ENCODE measurements at regions of chr17 and their contacts with region 1.

Region 1: GRCh38 chr17:37650419-37651003 is 7.3 kb upstream of the DDX52 start:
- DNase-seq: peak; percentile 62
- H3K4me3 Mint-ChIP-seq: no peak overlapping the region
- H3K27ac Mint-ChIP-seq: no peak overlapping the region
- H3K4me1 Mint-ChIP-seq: peaks cover 5% of the 10 kb centered on the region
- H3K27me3 Mint-ChIP-seq: peaks cover 12% of the 10 kb centered on the region
- CTCF ChIP-seq: peak; percentile 58

Region 2: GRCh38 chr17:37691807-37692400 is 41.4 kb after region 1 on chr17:
- CTCF ChIA-PET with region 1: interaction called, 16 read pairs
- POLR2A ChIA-PET with region 1: no interaction called
- intact Hi-C with region 1: no loop called
- DNase-seq: no peak
- H3K4me3 Mint-ChIP-seq: no peak overlapping the region
- H3K27ac Mint-ChIP-seq: no peak overlapping the region
- H3K4me1 Mint-ChIP-seq: peaks cover 7% of the 10 kb centered on the region
- H3K27me3 Mint-ChIP-seq: no peaks in the 10 kb centered on the region
- CTCF ChIP-seq: no peak

Region 3: DNA sequence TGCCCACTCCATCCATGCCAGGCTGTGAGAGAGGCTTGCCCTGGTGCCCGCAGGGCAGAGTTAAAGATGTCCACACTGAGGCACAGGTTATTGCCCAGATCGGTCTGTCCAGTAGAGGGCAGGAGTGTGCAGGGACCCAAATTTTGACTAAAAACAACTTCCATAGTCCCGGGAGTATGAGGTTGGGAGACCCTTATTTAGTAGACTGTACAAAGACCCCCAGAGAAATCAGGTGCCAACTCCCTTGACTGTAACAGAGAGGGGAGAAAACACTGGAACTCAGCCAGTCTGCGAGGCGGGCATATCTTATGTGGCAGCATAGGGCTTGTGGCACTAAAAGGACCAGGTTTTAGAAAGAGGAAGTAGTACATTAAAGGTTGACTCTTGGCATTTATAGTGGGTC is 51.0 kb after region 1 on chr17:
- CTCF ChIA-PET with region 1: interaction called, 5 read pairs
- POLR2A ChIA-PET with region 1: no interaction called
- intact Hi-C with region 1: loop called (anchors 1 kb)
- DNase-seq: peak; percentile 60
- H3K4me3 Mint-ChIP-seq: no peak overlapping the region
- H3K27ac Mint-ChIP-seq: no peak overlapping the region
- H3K4me1 Mint-ChIP-seq: peaks cover 20% of the 10 kb centered on the region
- H3K27me3 Mint-ChIP-seq: no peaks in the 10 kb centered on the region
- CTCF ChIP-seq: peak; percentile 52

Region 4: DNA sequence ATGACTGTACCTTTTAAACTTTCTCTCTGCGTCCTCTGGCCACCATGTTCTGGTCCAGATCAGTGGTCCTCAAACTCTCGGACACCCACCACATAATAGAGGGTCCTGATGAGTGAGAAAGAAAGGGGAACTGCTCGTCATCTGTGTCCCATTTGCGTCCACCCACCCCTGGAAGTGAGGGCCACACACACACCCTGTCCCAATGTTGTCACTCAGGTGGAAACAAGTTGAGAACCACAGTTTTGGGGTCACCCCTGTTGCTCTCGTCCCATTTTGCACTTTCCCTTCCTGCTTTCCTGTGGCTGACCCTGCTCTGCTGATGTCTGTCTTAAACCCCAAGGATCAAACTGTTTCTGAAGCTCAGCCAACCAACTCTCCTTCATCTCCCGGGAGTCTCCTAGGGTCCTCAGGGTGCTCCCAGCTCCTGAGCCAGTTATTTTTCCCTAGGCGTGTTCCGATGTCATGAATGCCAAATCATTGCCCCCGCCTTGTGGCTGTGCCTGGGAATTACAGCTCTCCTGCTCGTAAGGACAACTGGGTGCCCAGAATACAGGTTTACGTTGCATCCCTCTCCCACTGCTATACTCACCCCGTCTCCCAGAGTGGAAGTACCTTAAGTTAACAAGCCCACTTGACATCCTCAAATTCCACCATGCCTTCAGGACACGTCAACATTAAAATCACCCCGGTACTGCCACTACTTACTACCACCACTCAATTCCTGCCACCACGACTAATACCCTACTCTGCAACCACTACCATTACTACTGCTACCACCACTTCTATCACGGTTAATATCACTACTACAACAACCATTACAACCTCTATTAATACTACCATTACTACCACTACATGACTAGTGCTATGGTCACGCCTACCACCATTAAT is 120.4 kb after region 1 on chr17:
- CTCF ChIA-PET with region 1: interaction called, 66 read pairs
- POLR2A ChIA-PET with region 1: interaction called, 4 read pairs
- intact Hi-C with region 1: loop called (anchors 1 kb)
- DNase-seq: peak; percentile 75
- H3K4me3 Mint-ChIP-seq: no peak overlapping the region
- H3K27ac Mint-ChIP-seq: no peak overlapping the region
- H3K4me1 Mint-ChIP-seq: peaks cover 18% of the 10 kb centered on the region
- H3K27me3 Mint-ChIP-seq: no peaks in the 10 kb centered on the region
- CTCF ChIP-seq: peak; percentile 87

Region 5: GRCh38 chr17:37818689-37819088 is 168.2 kb after region 1 on chr17:
- CTCF ChIA-PET with region 1: interaction called, 49 read pairs
- POLR2A ChIA-PET with region 1: interaction called, 6 read pairs
- intact Hi-C with region 1: loop called (anchors 1 kb)
- DNase-seq: peak; percentile 88
- H3K4me3 Mint-ChIP-seq: no peak overlapping the region
- H3K27ac Mint-ChIP-seq: no peak overlapping the region
- H3K4me1 Mint-ChIP-seq: peaks cover 10% of the 10 kb centered on the region
- H3K27me3 Mint-ChIP-seq: no peaks in the 10 kb centered on the region
- CTCF ChIP-seq: no peak

Region 6: DNA sequence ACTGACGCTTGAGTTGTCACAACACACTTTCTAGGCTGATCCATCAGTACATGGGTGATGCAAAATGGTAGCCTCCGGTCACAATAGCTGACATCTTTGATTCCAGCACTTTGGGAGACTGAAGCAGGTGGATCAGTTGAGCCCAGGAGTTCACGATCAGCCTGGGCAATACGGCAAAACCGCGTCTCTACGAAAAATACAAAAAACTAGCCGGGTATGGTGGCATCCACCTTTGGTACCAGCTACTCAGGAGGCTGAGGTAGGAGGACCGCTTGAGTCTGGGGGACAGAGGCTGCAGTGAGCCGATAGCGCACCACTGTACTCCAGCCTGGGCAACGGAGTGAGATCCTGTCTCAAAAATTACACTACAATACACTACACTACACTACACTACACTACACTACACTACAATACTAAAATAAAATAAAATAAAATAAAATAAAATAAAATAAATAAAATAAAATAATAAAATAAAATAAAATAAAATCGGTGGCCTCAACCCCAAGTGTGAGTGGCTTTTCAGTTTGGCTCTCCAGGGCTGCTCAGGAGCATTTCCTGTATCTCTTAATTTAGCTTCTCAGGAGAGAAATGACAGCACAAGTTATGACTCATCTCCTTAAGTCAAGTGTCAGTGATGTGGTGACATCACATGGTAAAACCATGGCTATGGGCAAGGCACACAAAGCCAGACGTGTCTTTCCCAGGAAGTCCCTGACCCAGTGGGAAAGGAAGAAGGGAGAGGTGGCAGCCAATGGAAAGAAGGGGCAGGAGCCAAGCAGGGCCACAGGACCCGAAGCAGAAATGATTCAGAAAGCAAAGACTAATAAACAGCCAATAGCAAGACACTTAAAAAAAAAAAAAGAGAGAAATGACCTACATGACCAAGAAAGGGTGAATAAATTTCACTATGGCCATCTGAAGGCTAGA is 198.4 kb after region 1 on chr17:
- CTCF ChIA-PET with region 1: no interaction called
- POLR2A ChIA-PET with region 1: no interaction called
- intact Hi-C with region 1: loop called (anchors 1 kb)
- DNase-seq: peak; percentile 74
- H3K4me3 Mint-ChIP-seq: no peak overlapping the region
- H3K27ac Mint-ChIP-seq: peak overlapping the region; percentile 11
- H3K4me1 Mint-ChIP-seq: peaks cover 6% of the 10 kb centered on the region
- H3K27me3 Mint-ChIP-seq: peaks cover 11% of the 10 kb centered on the region
- CTCF ChIP-seq: no peak